OCI-LY7 (cell line): ENCODE measurements at regions of chr2 and their contacts with region 1.

Region 1: GRCh38 chr2:12931186-12931844 is 214.6 kb downstream of the TRIB2 start:
- DNase-seq: peak; percentile 23
- H3K4me3 ChIP-seq: no peak overlapping the region
- H3K27ac ChIP-seq: no peak overlapping the region
- H3K4me1 ChIP-seq: peaks cover 22% of the 10 kb centered on the region
- CTCF ChIP-seq: peak; percentile 88

Region 2: GRCh38 chr2:12430407-12431133 is 500.7 kb before region 1 on chr2:
- CTCF ChIA-PET with region 1: no interaction called
- POLR2A ChIA-PET with region 1: no interaction called
- intact Hi-C with region 1: loop called (anchors 1 kb)
- DNase-seq: peak; percentile 1
- H3K4me3 ChIP-seq: no peak overlapping the region
- H3K27ac ChIP-seq: no peak overlapping the region
- H3K4me1 ChIP-seq: no peaks in the 10 kb centered on the region
- CTCF ChIP-seq: no peak

Region 3: GRCh38 chr2:12649602-12650400 is 281.5 kb before region 1 on chr2:
- CTCF ChIA-PET with region 1: no interaction called
- POLR2A ChIA-PET with region 1: no interaction called
- intact Hi-C with region 1: no loop called
- DNase-seq: no peak
- H3K4me3 ChIP-seq: no peak overlapping the region
- H3K27ac ChIP-seq: no peak overlapping the region
- H3K4me1 ChIP-seq: no peaks in the 10 kb centered on the region
- CTCF ChIP-seq: no peak